Aorta (tissue), 5 donors: ENCODE measurements at regions of chr9 and their contacts with region 1.

Region 1: GRCh38 chr9:127187231-127187956 is 65.0 kb upstream of the ANGPTL2 start:
- DNase-seq: peak; percentile 82 to 84
- ATAC-seq: peak; percentile 80
- H3K4me3 ChIP-seq: no peak overlapping the region
- H3K27ac ChIP-seq: peak overlapping the region; percentile 44 to 93
- H3K4me1 ChIP-seq: peaks cover 4 to 7% of the 10 kb centered on the region in 2 donors
- H3K27me3 ChIP-seq: no peaks in the 10 kb centered on the region

Region 2: GRCh38 chr9:127053057-127053821 is 134.2 kb before region 1 on chr9:
- intact Hi-C with region 1: loop called in 1 of 2 experiments (anchors 5 kb)
- DNase-seq: no peak
- ATAC-seq: no peak
- H3K4me3 ChIP-seq: no peak overlapping the region
- H3K27ac ChIP-seq: peak overlapping the region; percentile 11 to 32
- H3K4me1 ChIP-seq: no peaks in the 10 kb centered on the region
- H3K27me3 ChIP-seq: no peaks in the 10 kb centered on the region

Region 3: GRCh38 chr9:127122176-127123063 is 65.0 kb before region 1 on chr9 and contains the start of gene ANGPTL2:
- intact Hi-C with region 1: loop called in 1 of 2 experiments (anchors 5 kb)
- DNase-seq: peak; percentile 95 to 96
- ATAC-seq: peak; percentile 94
- H3K4me3 ChIP-seq: peak within 1 kb of the TSS; percentile 21 to 28
- H3K27ac ChIP-seq: peak within 1 kb of the TSS; percentile 78 to 81
- H3K4me1 ChIP-seq: no peaks in the 10 kb centered on the region
- H3K27me3 ChIP-seq: no peaks in the 10 kb centered on the region
- total RNA-seq, gene ANGPTL2: 36.7 to 44.8 TPM

Region 4: GRCh38 chr9:127133739-127134167 is 53.6 kb before region 1 on chr9:
- intact Hi-C with region 1: loop called in 1 of 2 experiments (anchors 2 kb)
- DNase-seq: peak in 1 of 2 donors; percentile 83
- ATAC-seq: peak; percentile 58
- H3K4me3 ChIP-seq: no peak overlapping the region
- H3K27ac ChIP-seq: peak overlapping the region; percentile 37 to 94
- H3K4me1 ChIP-seq: peaks cover 0 to 6% of the 10 kb centered on the region in 2 donors
- H3K27me3 ChIP-seq: no peaks in the 10 kb centered on the region

Region 5: GRCh38 chr9:127144670-127145445 is 42.5 kb before region 1 on chr9:
- intact Hi-C with region 1: loop called in 1 of 2 experiments (anchors 5 kb)
- DNase-seq: no peak
- ATAC-seq: no peak
- H3K4me3 ChIP-seq: no peak overlapping the region
- H3K27ac ChIP-seq: no peak overlapping the region
- H3K4me1 ChIP-seq: no peaks in the 10 kb centered on the region
- H3K27me3 ChIP-seq: no peaks in the 10 kb centered on the region

Region 6: DNA sequence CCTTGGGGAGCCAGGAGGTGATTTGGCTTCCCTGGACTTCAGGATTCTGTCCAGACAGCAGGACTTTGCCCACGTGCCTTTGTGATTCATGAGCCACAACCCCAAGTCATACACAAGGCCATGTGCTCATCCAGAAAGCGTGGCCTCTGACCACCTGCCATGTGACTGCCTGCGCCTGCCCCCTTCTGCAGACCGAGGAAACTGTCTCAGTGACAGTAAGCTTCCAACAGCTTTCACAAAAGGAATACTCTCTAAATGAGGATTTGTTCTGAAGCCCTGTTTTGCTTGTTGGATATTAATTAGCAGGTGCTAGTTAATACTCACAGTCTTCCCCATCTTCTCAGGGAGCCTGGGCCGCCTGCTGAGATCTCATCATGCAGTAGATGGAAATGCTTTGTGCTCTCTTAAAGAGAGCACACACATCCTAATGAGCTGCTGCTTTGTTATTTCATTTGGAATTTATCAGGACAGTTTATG is 28.0 kb before region 1 on chr9:
- intact Hi-C with region 1: no loop called
- DNase-seq: no peak
- ATAC-seq: no peak
- H3K4me3 ChIP-seq: no peak overlapping the region
- H3K27ac ChIP-seq: no peak overlapping the region
- H3K4me1 ChIP-seq: no peaks in the 10 kb centered on the region
- H3K27me3 ChIP-seq: no peaks in the 10 kb centered on the region

Region 7: DNA sequence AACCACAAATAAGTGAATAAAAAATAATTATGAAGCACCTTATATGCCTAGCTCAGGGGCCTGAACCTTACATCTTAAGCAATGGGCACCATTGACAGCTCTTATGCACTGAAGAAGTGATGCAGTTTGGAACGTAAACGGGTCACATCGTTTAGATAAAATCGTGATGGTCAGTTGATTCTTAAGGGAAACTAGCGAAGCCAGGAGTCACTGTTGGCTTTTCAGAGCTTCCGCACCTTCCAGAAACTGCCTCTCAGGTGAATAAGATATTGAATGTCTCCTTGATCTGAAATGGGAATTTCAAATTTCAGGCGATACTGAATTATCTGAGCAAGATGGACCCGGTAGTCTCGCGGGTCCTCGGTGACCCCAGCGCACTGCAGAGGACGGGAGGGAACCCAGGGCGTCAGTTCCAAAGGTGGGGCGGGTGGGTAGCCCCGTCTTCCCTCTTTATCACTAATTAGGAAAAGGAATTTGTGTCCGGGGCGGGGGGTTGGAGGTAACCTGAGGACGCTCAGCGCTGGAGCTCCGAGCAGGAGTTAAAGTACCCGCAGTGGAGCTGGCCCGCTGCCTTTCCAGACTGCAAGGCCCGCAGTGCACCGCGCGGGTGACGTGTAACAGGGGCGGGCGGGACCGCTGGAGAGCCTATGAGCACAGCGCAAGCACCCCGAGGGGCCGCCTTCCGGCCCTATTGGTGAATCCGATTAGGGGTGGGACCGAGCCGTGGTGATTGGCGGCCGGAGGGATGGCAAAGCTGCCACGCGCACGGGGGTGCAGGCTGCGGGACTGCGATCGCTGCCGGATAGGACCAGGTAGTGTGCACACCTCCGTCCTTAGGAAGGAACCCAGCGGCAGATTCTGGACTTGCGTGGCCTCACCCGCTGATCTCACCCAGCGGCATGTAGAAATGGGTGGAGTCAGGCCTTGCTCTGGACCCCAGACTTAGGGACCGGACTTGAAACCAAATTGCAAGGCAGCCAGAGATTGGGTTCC is 57.5 kb after region 1 on chr9:
- intact Hi-C with region 1: no loop called
- DNase-seq: peak; percentile 99
- ATAC-seq: peak; percentile 99
- H3K4me3 ChIP-seq: peak overlapping the region in 1 of 2 donors; percentile 50
- H3K27ac ChIP-seq: peak overlapping the region in 1 of 2 donors; percentile 22
- H3K4me1 ChIP-seq: peaks cover 0 to 2% of the 10 kb centered on the region in 2 donors
- H3K27me3 ChIP-seq: no peaks in the 10 kb centered on the region

Region 8: GRCh38 chr9:127698985-127699670 is 511.7 kb after region 1 on chr9:
- intact Hi-C with region 1: no loop called
- DNase-seq: peak; percentile 97 to 99
- ATAC-seq: peak; percentile 98
- H3K4me3 ChIP-seq: no peak overlapping the region
- H3K27ac ChIP-seq: peak overlapping the region in 1 of 2 donors; percentile 50
- H3K4me1 ChIP-seq: no peaks in the 10 kb centered on the region
- H3K27me3 ChIP-seq: no peaks in the 10 kb centered on the region